HCT116 (cell line): ENCODE measurements at regions of chr1 and their contacts with region 1.

Region 1: DNA sequence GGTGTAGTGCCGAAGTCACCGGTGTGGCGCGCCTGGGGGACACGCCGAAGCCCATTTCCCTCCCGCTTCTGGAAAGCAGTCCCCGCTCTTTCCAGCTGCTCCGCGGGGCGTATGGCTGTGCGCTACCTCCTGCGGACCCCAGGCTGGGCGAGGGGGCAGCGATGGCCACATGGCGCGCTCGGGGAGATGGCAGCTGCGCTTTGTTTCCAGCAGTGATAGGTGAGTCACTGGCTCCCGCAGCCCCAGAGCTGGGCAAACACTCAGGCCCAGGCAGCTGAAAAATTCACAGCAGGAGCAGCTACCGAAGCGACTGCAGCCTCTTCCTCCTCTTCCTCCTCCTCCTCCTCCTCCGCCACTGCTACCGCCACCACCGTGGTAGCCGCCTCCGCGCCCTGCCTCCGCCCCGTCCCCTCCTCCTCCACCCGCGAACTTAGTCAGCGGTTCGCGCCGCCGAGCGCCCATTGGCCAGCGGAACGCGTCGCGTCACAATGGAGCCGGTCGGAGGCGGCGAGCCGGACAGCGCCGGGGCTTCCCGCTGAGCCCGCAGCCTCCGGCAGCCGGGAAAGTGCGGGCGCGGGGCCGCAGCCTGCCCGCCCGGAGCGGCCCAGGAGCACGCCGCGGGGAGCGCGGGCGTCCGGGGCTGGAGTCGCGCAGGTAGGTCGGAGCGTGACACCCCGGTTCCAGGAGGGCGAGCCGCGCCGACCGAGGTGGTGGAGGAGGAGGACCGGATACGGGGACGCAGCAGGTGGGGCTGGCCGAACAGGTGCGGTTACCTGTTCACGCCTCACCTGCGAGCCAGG is at the start of gene LRRC8B:
- DNase-seq: peak; percentile 74
- ATAC-seq: peak; percentile 92
- H3K4me3 ChIP-seq: peak within 1 kb of the TSS; percentile 88 to 94
- H3K27ac ChIP-seq: peak within 1 kb of the TSS; percentile 89
- H3K4me1 ChIP-seq: peaks cover 9 to 19% of the 10 kb centered on the region in 2 experiments; a peak in 3 of 4 replicates
- H3K27me3 ChIP-seq: no peaks in the 10 kb centered on the region
- CTCF ChIP-seq: no peak
- POLR2A ChIP-seq: peak; percentile 58
- RAD21 ChIP-seq: no peak
- total RNA-seq, gene LRRC8B: 17.9 TPM

Region 2: GRCh38 chr1:89994805-89995597 is 470.4 kb after region 1 on chr1 and contains the start of gene ZNF326:
- CTCF ChIA-PET with region 1: no interaction called
- POLR2A ChIA-PET with region 1: no interaction called
- RAD21 ChIA-PET with region 1: no interaction called
- intact Hi-C with region 1: loop called (anchors 10 kb)
- DNase-seq: peak; percentile 96
- ATAC-seq: peak; percentile 96
- H3K4me3 ChIP-seq: peak within 1 kb of the TSS; percentile 83 to 86
- H3K27ac ChIP-seq: peak within 1 kb of the TSS; percentile 91
- H3K4me1 ChIP-seq: peaks cover 4 to 36% of the 10 kb centered on the region in 2 experiments; a peak in 3 of 4 replicates
- H3K27me3 ChIP-seq: no peaks in the 10 kb centered on the region
- CTCF ChIP-seq: no peak
- POLR2A ChIP-seq: peak; percentile 93
- RAD21 ChIP-seq: no peak
- total RNA-seq, gene ZNF326: 19.3 TPM